CD8-positive, alpha-beta memory T cell (primary cell): ENCODE measurements at regions of chr7 and their contacts with region 1.

Region 1: DNA sequence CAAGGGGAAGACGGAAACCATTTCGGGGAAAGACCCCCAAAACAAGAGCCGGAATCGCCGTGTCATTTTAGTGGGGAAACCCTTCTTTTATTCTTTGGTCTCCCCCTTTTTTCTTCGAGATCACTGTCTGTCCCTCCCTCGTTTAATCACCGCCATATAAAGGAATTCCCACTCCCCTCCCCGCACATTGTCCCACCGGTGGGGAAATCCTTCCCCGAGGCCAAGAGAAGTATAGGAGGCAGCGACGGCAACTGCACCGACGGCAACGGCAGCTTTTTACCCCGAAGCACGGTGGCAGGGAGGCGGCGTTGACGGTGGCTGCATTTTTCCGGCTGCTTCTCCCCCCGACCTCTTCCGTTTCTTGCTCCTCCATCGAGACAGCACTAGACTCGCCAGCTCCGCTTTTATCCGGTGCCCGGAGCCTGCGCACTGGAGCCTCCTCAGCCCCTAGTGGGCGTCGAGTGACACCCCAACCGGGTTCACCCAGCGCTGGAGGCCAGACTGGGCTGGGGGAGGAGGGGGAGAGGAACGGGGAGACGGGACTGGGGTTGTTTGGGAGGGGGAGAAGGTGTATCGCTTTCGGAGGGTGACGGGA is 687 bp upstream of the KMT2E start:
- DNase-seq: peak; percentile 86 to 99 (median 95)
- H3K4me3 ChIP-seq: peak overlapping the region; percentile 100
- H3K4me3 Mint-ChIP-seq: peak overlapping the region; percentile 96 to 100 (median 98)
- H3K27ac ChIP-seq: peak overlapping the region; percentile 100
- H3K27ac Mint-ChIP-seq: peak overlapping the region; percentile 100
- H3K4me1 ChIP-seq: peaks cover 28% of the 10 kb centered on the region
- H3K4me1 Mint-ChIP-seq: peaks cover 39 to 45% (median 45%) of the 10 kb centered on the region in 3 donors
- H3K27me3 ChIP-seq: no peaks in the 10 kb centered on the region
- H3K27me3 Mint-ChIP-seq: peaks cover 0 to 14% of the 10 kb centered on the region in 2 donors

Region 2: DNA sequence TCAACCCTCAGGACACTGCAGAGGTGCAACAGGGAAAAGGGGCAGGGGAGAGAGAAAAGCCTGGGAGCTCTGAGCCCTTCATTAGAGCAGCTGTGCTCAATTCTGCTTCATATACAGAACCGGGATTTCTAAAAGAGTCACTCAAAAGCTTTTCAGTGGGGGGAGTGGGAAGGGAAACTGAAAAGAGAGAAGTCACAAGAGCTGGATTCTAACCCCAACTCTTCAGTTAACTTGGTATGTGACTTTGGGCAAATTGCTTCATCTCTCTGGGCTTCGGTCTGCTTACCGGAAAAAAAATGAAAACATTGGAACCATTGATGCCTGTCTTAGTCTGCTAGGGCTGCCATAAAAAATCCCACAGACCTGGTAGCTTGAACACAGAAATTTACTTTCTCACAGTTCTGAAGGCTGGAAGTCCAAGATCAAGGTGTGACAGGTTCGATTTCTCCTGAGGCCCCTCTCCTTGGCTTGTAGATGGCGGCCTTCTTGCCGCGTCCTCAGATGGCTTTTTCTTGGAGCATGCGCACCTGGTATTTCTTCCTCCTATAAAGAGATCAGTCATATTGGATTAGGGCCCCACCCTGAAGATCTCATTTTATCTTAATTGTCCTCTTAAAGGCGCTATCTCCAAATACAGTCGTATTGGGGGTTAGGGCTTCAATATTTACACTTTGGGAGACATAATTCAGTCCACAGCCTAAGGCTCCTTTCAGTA is 117.6 kb before region 1 on chr7:
- CTCF ChIA-PET with region 1: no interaction called
- POLR2A ChIA-PET with region 1: no interaction called
- DNase-seq: no peak
- H3K4me3 ChIP-seq: no peak overlapping the region
- H3K4me3 Mint-ChIP-seq: no peak overlapping the region
- H3K27ac ChIP-seq: no peak overlapping the region
- H3K27ac Mint-ChIP-seq: no peak overlapping the region
- H3K4me1 ChIP-seq: no peaks in the 10 kb centered on the region
- H3K4me1 Mint-ChIP-seq: peaks cover 4 to 5% (median 4%) of the 10 kb centered on the region in 3 donors
- H3K27me3 ChIP-seq: no peaks in the 10 kb centered on the region
- H3K27me3 Mint-ChIP-seq: peaks cover 0 to 7% of the 10 kb centered on the region in 2 donors

Region 3: DNA sequence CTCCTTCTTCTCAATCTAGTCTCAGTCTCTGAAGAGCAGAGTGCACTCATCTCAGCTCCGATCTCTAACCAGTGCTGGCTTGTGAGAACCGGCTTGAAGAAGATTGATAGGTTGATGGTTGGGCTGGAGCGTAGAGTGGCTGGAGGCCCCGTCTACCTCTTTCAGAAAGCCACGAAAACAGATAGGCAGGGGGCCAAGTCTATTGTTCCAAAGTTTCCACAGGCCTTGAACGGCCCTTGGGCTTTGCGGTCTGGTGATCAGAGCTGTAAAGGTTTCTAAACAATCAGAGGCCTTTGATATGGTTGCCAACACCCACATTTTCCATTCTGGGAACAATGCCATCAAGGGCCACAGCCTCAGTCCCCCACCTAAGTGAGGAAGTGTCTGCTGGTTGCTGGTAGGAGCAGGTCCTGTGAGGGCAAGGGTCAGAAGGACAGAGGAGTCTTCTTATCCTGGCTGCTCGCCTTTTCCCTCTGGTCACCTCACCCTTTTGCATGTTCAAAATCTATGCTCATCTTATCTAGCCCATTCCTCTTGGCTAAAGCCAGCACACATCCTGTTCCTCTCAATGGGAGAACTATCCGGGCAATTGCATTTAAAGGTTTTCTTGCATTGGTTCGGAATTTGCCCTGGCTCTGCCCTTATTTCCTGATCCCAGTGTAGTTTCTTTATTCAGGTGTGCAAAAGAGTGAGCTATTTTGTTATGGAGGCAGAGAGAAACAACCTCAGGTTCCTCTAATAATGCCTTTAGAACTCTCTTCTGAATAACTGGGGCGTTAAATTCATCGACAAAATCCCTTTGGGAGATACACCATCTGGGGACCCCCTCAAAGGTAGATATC is 69.6 kb before region 1 on chr7:
- CTCF ChIA-PET with region 1: interaction called, 7 read pairs
- POLR2A ChIA-PET with region 1: interaction called, 40 read pairs
- DNase-seq: peak; percentile 47 to 89 (median 69)
- H3K4me3 ChIP-seq: peak overlapping the region; percentile 12
- H3K4me3 Mint-ChIP-seq: peak overlapping the region; percentile 73 to 95 (median 90)
- H3K27ac ChIP-seq: peak overlapping the region; percentile 99
- H3K27ac Mint-ChIP-seq: peak overlapping the region; percentile 99 to 100 (median 100)
- H3K4me1 ChIP-seq: peaks cover 55% of the 10 kb centered on the region
- H3K4me1 Mint-ChIP-seq: peaks cover 53 to 78% (median 66%) of the 10 kb centered on the region in 3 donors
- H3K27me3 ChIP-seq: no peaks in the 10 kb centered on the region
- H3K27me3 Mint-ChIP-seq: peaks cover 0 to 7% of the 10 kb centered on the region in 2 donors

Region 4: GRCh38 chr7:104961821-104962220 is 51.5 kb before region 1 on chr7:
- CTCF ChIA-PET with region 1: interaction called, 4 read pairs
- POLR2A ChIA-PET with region 1: interaction called, 12 read pairs
- DNase-seq: no peak
- H3K4me3 ChIP-seq: no peak overlapping the region
- H3K4me3 Mint-ChIP-seq: no peak overlapping the region
- H3K27ac ChIP-seq: no peak overlapping the region
- H3K27ac Mint-ChIP-seq: peak overlapping the region in 4 of 8 donors; percentile 11 to 70 (median 31)
- H3K4me1 ChIP-seq: peaks cover 7% of the 10 kb centered on the region
- H3K4me1 Mint-ChIP-seq: peaks cover 9 to 28% (median 10%) of the 10 kb centered on the region in 3 donors
- H3K27me3 ChIP-seq: no peaks in the 10 kb centered on the region
- H3K27me3 Mint-ChIP-seq: no peaks in the 10 kb centered on the region

Region 5: DNA sequence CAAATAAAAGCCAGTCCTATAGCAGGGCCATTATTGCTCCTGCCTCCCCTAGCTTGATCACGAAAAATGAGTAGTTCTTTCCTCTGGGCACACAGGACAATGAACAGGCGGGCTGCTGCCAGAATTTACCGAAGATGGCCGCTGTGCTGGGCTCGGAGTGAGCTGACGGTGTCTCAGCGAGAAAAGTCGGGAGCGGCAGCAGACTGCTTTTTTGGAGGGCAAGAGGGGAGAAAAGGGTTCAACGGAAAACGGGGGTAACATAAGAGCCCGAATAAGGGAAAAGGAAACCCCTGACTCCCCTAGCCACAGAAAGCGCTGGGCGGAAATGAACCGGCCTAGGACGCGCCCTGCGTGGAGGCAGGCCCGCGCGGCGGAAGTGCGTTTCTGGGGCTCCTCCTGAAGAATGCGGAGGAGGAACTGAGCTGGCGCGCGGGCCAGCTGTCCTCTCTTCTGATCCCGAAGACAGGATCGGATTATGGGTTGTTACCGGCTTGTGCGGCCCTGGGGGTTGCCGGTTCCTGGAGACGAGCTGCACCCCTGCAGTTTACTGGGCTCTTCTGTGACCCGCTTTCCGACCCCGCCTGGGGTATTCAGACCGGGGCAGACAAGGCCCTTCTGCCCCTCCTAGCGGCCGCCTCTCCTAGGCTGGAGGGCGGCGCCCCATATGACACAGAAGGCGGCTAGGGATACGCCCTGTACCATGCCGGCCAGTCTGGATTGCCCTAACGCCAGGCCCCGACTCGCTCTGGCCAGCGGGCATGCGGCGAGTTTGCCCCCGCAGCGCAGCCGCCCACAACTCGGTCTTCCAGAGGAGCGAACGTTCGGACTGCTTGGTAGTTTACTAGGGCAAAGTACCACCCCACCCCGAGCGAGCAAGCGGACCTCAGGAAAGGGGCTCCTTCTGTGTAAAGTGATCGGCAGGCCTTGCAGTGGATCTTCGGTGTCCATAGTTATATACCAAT is 29.5 kb before region 1 on chr7:
- CTCF ChIA-PET with region 1: interaction called, 204 read pairs
- POLR2A ChIA-PET with region 1: interaction called, 227 read pairs
- DNase-seq: peak; percentile 75 to 90 (median 84)
- H3K4me3 ChIP-seq: peak overlapping the region; percentile 92
- H3K4me3 Mint-ChIP-seq: peak overlapping the region; percentile 92 to 100 (median 100)
- H3K27ac ChIP-seq: peak overlapping the region; percentile 98
- H3K27ac Mint-ChIP-seq: peak overlapping the region in 7 of 8 donors; percentile 98 to 100 (median 100)
- H3K4me1 ChIP-seq: peaks cover 25% of the 10 kb centered on the region
- H3K4me1 Mint-ChIP-seq: peaks cover 55 to 78% (median 60%) of the 10 kb centered on the region in 3 donors
- H3K27me3 ChIP-seq: no peaks in the 10 kb centered on the region
- H3K27me3 Mint-ChIP-seq: no peaks in the 10 kb centered on the region

Region 6: DNA sequence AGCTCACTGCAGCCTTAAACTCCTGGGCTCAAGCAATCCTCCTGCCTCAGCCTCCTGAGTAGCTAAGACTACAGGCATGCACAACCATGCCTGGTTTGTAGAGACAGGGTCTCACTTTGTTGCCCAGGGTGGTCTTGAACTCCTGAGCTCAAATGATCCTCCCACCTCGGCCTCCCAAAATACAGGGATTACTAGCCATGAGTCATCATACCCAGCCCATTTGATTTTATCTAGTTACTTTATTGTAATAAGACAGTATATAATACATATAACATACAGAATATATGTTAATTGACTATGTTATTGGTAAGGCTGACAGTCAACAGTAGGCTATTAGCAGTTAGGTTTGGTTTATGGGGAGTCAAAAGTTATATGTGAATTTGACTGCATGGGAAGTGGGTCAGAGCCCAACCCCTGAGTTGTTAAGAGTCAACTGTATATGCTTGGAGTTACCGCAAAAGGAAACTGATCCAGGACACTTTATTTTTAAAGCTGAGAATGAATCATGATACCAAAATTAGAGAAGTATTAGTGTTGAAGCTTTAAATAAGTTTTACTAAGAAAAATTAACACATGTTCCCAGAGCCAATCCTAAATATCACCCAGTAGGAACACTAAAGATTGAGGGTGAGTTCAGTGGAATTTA is 20.0 kb before region 1 on chr7:
- CTCF ChIA-PET with region 1: interaction called, 13 read pairs
- POLR2A ChIA-PET with region 1: interaction called, 227 read pairs
- DNase-seq: no peak
- H3K4me3 ChIP-seq: no peak overlapping the region
- H3K4me3 Mint-ChIP-seq: peak overlapping the region in 3 of 7 donors; percentile 10 to 22 (median 13)
- H3K27ac ChIP-seq: no peak overlapping the region
- H3K27ac Mint-ChIP-seq: peak overlapping the region; percentile 20 to 93 (median 68)
- H3K4me1 ChIP-seq: peaks cover 62% of the 10 kb centered on the region
- H3K4me1 Mint-ChIP-seq: peaks cover 59 to 70% (median 67%) of the 10 kb centered on the region in 3 donors
- H3K27me3 ChIP-seq: no peaks in the 10 kb centered on the region
- H3K27me3 Mint-ChIP-seq: no peaks in the 10 kb centered on the region